A549 (cell line): ENCODE measurements at regions of chr11 and their contacts with region 1.

Region 1: GRCh38 chr11:77127232-77127911 is 674 bp upstream of the MYO7A start:
- DNase-seq: peak; percentile 36 to 63
- ATAC-seq: peak; percentile 67 to 89
- H3K4me3 ChIP-seq: peak overlapping the region; percentile 37
- H3K27ac ChIP-seq: peak overlapping the region in 1 of 2 experiments; percentile 61; a peak in 3 of 6 replicates
- H3K4me1 ChIP-seq: no peaks in the 10 kb centered on the region
- CTCF ChIP-seq: peak; percentile 99
- EP300 ChIP-seq: no peak
- POLR2A ChIP-seq: no peak
- RAD21 ChIP-seq: peak; percentile 69 to 86

Region 2: GRCh38 chr11:76172583-76172982 is 954.8 kb before region 1 on chr11:
- CTCF ChIA-PET with region 1: no interaction called
- POLR2A ChIA-PET with region 1: no interaction called
- DNase-seq: no peak
- ATAC-seq: no peak
- H3K4me3 ChIP-seq: no peak overlapping the region
- H3K27ac ChIP-seq: no peak overlapping the region
- H3K4me1 ChIP-seq: no peaks in the 10 kb centered on the region
- CTCF ChIP-seq: no peak
- EP300 ChIP-seq: no peak
- POLR2A ChIP-seq: no peak
- RAD21 ChIP-seq: no peak

Region 3: DNA sequence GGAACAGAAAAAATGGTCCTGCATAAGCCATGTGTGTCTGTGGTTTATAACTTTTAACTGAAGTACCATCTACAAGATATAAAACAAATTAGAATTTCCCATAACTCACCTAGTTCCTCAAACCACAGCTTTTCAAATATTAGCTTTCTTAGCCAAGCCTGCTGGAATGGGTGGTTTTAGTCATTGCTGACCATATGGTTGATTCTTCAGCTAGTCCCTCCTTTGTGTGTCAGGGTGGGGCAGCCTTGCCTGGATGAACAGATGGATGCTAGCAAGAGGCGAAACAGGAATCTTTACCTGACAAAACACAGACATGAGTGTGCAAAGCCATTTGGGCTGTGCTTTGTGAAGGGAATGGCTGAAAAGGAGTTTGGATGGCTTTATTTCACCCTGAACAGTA is 100.1 kb before region 1 on chr11:
- CTCF ChIA-PET with region 1: no interaction called
- POLR2A ChIA-PET with region 1: no interaction called
- DNase-seq: peak in 1 of 2 experiments; percentile 40
- ATAC-seq: peak in 1 of 2 experiments; percentile 22; a peak in 2 of 6 replicates
- H3K4me3 ChIP-seq: no peak overlapping the region
- H3K27ac ChIP-seq: 0 out of 6 replicates have a peak overlapping the region, but pooled peaks of 1 of the 2 experiments have one; percentile 1
- H3K4me1 ChIP-seq: peaks cover 22% of the 10 kb centered on the region
- CTCF ChIP-seq: no peak
- EP300 ChIP-seq: no peak
- POLR2A ChIP-seq: no peak
- RAD21 ChIP-seq: no peak

Region 4: DNA sequence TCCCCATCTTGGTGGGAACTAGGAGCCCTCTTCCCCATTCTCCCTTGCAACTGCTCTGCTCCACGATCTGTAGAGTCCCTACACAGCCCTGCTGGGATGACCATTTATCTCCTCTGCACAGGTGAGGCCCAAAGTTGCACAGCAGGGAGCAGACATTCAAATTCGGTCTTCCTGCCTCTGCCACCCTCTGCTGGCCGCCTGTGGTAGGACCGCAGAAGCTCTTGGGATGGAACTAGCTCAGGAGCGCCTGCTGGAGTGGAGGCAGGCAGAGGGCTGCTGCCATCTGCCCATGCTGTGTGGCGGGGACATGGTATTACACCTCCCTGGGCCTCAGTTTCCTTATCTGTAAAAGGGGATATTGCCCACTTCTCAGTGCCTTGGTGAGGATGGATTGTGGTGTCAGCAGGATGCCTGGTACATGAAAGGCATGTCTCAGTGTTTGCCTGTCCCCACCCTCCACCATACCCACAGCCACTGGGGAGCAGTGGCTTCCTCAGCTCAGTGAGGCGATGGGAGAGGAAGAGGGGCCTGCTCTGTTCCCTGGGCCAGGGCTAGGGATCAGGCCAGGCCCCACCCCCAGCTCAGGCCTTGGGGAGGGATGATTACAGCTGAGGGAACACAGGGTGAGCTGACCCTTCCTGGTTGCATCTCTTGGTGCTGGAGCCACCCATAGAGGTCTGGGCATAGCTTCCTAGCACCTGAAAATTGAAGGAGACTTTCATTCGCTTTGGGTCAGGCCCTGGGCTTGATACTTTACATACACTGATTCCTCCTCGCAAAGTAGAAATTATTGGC is 36.0 kb before region 1 on chr11:
- CTCF ChIA-PET with region 1: interaction called, 290 read pairs
- POLR2A ChIA-PET with region 1: no interaction called
- DNase-seq: peak; percentile 85 to 90
- ATAC-seq: peak; percentile 89 to 95
- H3K4me3 ChIP-seq: no peak overlapping the region
- H3K27ac ChIP-seq: no peak overlapping the region
- H3K4me1 ChIP-seq: peaks cover 6% of the 10 kb centered on the region; the same call in 1 of the 3 replicates
- CTCF ChIP-seq: peak; percentile 95
- EP300 ChIP-seq: no peak
- POLR2A ChIP-seq: no peak
- RAD21 ChIP-seq: peak; percentile 95 to 96

Region 5: GRCh38 chr11:77140231-77140851 is 13.0 kb after region 1 on chr11:
- CTCF ChIA-PET with region 1: interaction called, 39 read pairs
- POLR2A ChIA-PET with region 1: no interaction called
- DNase-seq: no peak
- ATAC-seq: peak in 1 of 2 experiments; percentile 18; a peak in 1 of 6 replicates
- H3K4me3 ChIP-seq: no peak overlapping the region
- H3K27ac ChIP-seq: no peak overlapping the region
- H3K4me1 ChIP-seq: peaks cover 3% of the 10 kb centered on the region; the same call in 1 of the 3 replicates
- CTCF ChIP-seq: no peak
- EP300 ChIP-seq: no peak
- POLR2A ChIP-seq: no peak
- RAD21 ChIP-seq: no peak

Region 6: GRCh38 chr11:77167111-77167626 is 39.8 kb after region 1 on chr11:
- CTCF ChIA-PET with region 1: interaction called, 11 read pairs
- POLR2A ChIA-PET with region 1: no interaction called
- DNase-seq: no peak
- ATAC-seq: no peak
- H3K4me3 ChIP-seq: no peak overlapping the region
- H3K27ac ChIP-seq: no peak overlapping the region
- H3K4me1 ChIP-seq: no peaks in the 10 kb centered on the region
- CTCF ChIP-seq: no peak
- EP300 ChIP-seq: no peak
- POLR2A ChIP-seq: no peak
- RAD21 ChIP-seq: no peak

Region 7: DNA sequence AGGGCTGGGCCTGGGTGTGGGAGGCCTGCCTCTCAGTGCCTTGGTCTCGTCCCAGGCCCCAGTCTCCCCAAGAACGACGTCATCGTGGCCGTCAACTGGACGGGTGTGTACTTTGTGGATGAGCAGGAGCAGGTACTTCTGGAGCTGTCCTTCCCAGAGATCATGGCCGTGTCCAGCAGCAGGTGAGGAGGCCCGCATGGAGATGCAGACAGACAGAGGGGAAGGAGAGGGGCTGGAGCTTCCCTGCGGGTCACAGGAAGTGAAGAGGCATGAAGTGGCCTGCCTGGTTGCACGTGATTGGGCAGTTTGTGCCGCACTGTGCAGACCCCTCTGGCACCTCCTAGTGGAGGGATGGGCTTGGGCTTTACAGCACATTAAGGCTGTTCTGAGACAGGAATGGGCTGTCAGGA is 71.1 kb after region 1 on chr11:
- CTCF ChIA-PET with region 1: interaction called, 16 read pairs
- POLR2A ChIA-PET with region 1: no interaction called
- DNase-seq: peak; percentile 36 to 53
- ATAC-seq: peak in 1 of 2 experiments; percentile 80; a peak in 3 of 6 replicates
- H3K4me3 ChIP-seq: no peak overlapping the region
- H3K27ac ChIP-seq: no peak overlapping the region
- H3K4me1 ChIP-seq: no peaks in the 10 kb centered on the region
- CTCF ChIP-seq: 0 out of 3 replicates have a peak, but pooled peaks have one; percentile 9
- EP300 ChIP-seq: no peak
- POLR2A ChIP-seq: no peak
- RAD21 ChIP-seq: no peak

Region 8: DNA sequence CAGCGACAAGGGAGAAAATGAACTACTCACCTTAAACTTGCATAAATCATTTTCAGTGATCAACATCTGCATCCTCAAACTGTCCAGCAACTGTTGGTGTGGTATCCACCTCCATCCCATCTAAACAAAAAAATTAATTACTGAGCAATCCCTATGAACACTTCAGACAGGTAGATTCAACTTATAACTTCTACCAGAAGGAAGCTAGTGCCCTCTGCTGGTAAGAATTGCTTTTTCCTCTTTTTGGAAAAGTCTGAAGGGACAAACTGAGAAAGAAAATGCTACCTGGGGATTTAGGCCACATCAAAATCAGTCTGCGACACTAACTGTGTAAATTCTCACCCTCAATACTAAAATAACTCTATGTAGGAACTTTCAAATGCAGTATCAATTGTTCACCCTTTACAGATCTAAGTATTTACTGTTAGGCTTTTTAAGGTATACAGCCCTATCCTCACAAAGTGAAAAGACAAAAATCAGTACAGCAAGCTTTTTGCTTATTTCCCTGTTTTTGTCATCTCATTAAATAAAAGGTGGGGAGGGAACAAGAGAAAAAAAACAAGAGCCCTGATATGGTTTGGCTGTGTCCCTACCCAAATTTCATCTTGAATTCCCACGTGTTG is 492.3 kb after region 1 on chr11:
- CTCF ChIA-PET with region 1: interaction called, 16 read pairs
- POLR2A ChIA-PET with region 1: interaction called, 3 read pairs
- DNase-seq: peak; percentile 12 to 61
- ATAC-seq: peak in 1 of 2 experiments; percentile 76; a peak in 4 of 6 replicates
- H3K4me3 ChIP-seq: no peak overlapping the region
- H3K27ac ChIP-seq: no peak overlapping the region
- H3K4me1 ChIP-seq: no peaks in the 10 kb centered on the region
- CTCF ChIP-seq: peak; percentile 84
- EP300 ChIP-seq: no peak
- POLR2A ChIP-seq: no peak
- RAD21 ChIP-seq: peak; percentile 78 to 80